T-cell (primary cell): ENCODE measurements at regions of chr1 and their contacts with region 1.

Region 1: DNA sequence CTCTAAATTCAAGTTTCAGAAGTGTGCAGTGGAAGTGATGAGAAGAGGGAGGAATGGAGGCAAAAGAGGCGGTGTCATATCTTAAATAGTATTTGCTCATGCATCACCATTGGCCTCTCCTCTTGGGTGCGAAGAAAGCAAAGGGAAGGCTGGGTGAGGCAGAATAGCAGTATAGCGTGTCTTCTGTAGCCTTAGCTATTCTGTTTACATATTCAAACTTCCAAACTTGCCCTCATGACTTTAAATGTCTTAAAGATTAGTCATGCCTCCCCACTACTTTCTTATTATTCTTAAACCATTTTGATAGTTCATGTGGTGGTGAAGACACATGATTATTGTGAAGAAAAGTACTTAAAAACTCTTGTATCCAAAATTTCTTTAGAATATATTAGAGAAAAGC is 104.6 kb upstream of the TENT5C start:
- DNase-seq: no peak
- ATAC-seq: no peak
- H3K4me3 ChIP-seq: no peak overlapping the region
- H3K4me3 Mint-ChIP-seq: no peak overlapping the region
- H3K27ac ChIP-seq: no peak overlapping the region
- H3K27ac Mint-ChIP-seq: no peak overlapping the region
- H3K4me1 ChIP-seq: no peaks in the 10 kb centered on the region
- H3K4me1 Mint-ChIP-seq: no peaks in the 10 kb centered on the region
- H3K27me3 ChIP-seq: no peaks in the 10 kb centered on the region
- H3K27me3 Mint-ChIP-seq: no peaks in the 10 kb centered on the region

Region 2: DNA sequence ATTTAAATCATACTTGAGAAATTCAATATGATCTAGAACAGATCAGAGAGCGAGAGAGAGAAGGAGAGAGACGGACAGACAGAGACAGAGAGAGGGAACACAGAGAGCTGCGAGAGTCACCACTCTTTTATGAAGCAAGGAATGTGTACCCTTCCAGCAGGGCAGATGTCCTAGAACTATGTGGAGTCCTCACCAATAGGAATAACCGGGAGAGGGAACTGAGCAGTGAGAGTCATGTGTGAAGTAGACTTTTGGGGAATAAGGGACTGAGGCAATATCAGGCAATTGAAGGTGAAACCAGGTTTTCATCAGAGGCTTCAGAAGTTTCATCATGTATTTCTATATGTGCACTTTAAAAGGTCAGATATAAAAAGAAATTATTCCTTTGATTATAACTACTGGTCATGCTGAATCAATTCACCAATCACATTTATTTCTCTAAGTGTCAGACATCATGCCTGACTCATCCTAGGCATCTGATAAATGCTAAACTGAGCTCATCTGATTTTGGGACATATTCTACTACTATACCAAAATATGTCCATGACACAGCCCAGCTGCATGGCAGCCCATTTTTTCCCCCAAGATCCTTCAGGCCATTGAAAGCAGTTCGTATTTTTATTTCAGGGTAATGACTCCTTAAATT is 313.0 kb before region 1 on chr1:
- CTCF ChIA-PET with region 1: no interaction called
- POLR2A ChIA-PET with region 1: interaction called in 1 of 2 experiments, 11 read pairs
- DNase-seq: no peak
- ATAC-seq: no peak
- H3K4me3 ChIP-seq: no peak overlapping the region
- H3K4me3 Mint-ChIP-seq: no peak overlapping the region
- H3K27ac ChIP-seq: no peak overlapping the region
- H3K27ac Mint-ChIP-seq: no peak overlapping the region
- H3K4me1 ChIP-seq: no peaks in the 10 kb centered on the region
- H3K4me1 Mint-ChIP-seq: no peaks in the 10 kb centered on the region
- H3K27me3 ChIP-seq: no peaks in the 10 kb centered on the region
- H3K27me3 Mint-ChIP-seq: peaks cover 3 to 9% of the 10 kb centered on the region in 2 donors

Region 3: DNA sequence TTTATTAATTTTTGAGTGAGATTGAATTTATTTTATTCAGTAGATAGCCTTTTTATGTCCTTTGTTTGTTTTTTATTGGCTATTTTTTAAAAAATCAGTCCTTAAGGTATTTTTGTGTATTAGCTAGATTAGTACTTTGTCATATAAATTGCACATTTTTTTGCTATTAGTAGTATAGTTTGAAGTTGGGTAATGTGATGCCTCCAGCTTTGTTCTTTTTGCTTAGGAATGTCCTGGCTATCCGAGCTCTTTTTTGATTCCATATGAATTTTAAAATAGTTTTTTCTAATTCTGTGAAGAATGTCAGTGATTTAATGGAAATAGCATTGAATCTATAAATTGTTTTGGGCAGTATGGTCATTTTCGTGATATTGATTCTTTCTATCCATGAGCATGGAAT is 53.6 kb before region 1 on chr1:
- CTCF ChIA-PET with region 1: no interaction called
- POLR2A ChIA-PET with region 1: no interaction called
- DNase-seq: no peak
- ATAC-seq: no peak
- H3K4me3 ChIP-seq: no peak overlapping the region
- H3K4me3 Mint-ChIP-seq: no peak overlapping the region
- H3K27ac ChIP-seq: no peak overlapping the region
- H3K27ac Mint-ChIP-seq: no peak overlapping the region
- H3K4me1 ChIP-seq: no peaks in the 10 kb centered on the region
- H3K4me1 Mint-ChIP-seq: peaks cover 0 to 6% (median 0%) of the 10 kb centered on the region in 3 donors
- H3K27me3 ChIP-seq: no peaks in the 10 kb centered on the region
- H3K27me3 Mint-ChIP-seq: no peaks in the 10 kb centered on the region

Region 4: DNA sequence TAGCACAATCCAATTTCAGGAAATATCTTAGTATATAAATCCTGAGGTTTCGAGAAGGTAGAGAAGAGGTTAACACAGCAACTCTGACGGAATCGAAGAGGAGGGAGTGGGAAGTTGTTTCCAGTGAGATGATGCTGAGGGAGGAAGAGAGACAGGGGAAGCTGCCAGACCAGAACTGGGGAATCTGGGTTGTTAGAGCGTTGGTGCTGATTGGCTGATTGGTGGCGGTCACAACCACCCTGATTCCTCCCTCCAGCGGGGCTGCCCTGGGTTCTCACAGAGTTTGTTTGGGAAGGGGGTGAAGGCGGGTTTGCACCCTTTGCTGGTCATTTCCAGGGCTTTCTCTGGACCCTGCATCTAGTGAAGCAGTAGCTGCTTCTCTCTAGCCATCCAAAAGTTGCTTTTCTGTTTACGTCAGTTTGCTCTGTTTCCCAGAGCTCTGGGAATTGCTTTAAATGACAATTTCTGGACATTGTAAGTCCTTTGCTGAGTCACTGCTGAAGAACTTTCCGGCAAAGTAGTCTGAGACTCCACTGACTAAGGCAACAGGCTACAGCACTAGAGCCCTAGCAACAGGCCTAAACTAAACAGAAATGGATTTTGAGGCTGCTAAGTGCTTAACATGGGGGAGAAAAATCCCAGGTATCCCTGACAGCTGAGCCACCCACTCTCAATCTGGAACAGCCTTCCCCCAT is 194.7 kb after region 1 on chr1:
- CTCF ChIA-PET with region 1: no interaction called
- POLR2A ChIA-PET with region 1: no interaction called
- DNase-seq: no peak
- ATAC-seq: no peak
- H3K4me3 ChIP-seq: no peak overlapping the region
- H3K4me3 Mint-ChIP-seq: no peak overlapping the region
- H3K27ac ChIP-seq: no peak overlapping the region
- H3K27ac Mint-ChIP-seq: no peak overlapping the region
- H3K4me1 ChIP-seq: no peaks in the 10 kb centered on the region
- H3K4me1 Mint-ChIP-seq: no peaks in the 10 kb centered on the region
- H3K27me3 ChIP-seq: peaks cover 0 to 14% of the 10 kb centered on the region in 2 experiments
- H3K27me3 Mint-ChIP-seq: peaks cover 7 to 8% of the 10 kb centered on the region in 2 donors